CD4-positive, alpha-beta memory T cell (primary cell): ENCODE measurements at regions of chr4 and their contacts with region 1.

Region 1: DNA sequence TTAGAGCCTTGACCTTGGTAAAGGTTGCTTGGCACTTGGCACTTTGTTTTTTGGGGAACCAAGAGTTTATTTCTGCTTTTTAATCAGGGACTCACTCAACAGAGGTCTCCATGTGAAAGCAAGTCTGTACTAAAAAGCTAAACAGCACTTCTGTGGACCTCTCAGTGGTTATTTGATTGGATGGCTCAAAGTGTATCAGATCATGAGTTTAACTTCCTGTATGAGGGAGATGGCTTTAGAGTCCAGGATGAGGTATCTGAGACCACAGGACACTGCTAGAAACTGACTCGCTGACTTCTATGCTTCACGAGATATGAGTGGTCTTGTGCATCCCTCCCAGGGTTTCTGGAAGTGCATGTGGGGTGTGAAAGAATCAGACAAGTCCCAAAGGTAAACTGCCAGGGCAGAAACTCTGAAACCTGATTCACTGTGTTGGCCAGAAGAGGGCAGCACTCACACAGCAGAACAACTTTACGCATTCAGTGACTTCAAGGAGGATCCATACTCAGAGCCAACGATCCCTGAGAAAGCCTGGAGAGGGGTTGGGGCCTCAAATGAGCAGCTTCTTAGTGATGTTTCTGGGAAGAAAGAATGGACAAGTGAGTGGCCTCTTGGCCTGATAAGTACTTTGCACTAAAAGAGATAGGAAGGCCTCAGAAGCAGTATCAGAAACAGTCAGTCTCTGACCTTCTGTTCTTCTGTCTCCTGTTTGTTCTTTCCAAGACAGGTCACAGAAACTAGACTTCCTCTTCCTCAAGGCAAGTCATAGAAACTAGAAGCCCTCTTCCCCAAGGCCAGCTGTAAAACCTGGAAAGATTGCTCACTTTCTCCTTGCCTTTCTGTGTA is 220.3 kb upstream of the CXCL13 start:
- DNase-seq: peak in 4 of 5 donors; percentile 29 to 46 (median 36)
- H3K4me3 ChIP-seq: no peak overlapping the region
- H3K4me3 Mint-ChIP-seq: no peak overlapping the region
- H3K27ac ChIP-seq: no peak overlapping the region
- H3K27ac Mint-ChIP-seq: peak overlapping the region in 1 of 7 donors; percentile 2
- H3K4me1 ChIP-seq: no peaks in the 10 kb centered on the region
- H3K4me1 Mint-ChIP-seq: peaks cover 0 to 2% (median under 1%) of the 10 kb centered on the region in 4 donors
- H3K27me3 ChIP-seq: no peaks in the 10 kb centered on the region
- H3K27me3 Mint-ChIP-seq: peaks cover 0 to 3% of the 10 kb centered on the region in 2 donors

Region 2: DNA sequence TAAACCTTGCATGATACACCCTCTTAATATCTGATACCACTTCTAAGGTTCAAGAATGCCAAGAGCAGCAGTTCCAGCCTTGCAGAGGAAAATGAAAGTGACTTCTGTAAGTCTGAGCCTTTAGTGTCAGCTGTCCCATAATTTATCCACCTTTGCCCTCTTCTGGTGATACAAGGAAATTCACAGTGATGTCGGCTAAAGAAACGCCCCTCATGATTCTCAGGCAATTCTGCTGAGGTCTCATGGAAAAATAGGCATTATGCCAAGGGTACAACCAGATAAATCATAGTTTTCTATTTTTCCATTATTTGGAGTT is 48.0 kb after region 1 on chr4:
- CTCF ChIA-PET with region 1: interaction called, 13 read pairs
- POLR2A ChIA-PET with region 1: no interaction called
- intact Hi-C with region 1: no loop called
- DNase-seq: peak in 4 of 5 donors; percentile 25 to 34 (median 30)
- H3K4me3 ChIP-seq: no peak overlapping the region
- H3K4me3 Mint-ChIP-seq: no peak overlapping the region
- H3K27ac ChIP-seq: no peak overlapping the region
- H3K27ac Mint-ChIP-seq: no peak overlapping the region
- H3K4me1 ChIP-seq: peaks cover 3% of the 10 kb centered on the region
- H3K4me1 Mint-ChIP-seq: peaks cover 0 to 11% (median 5%) of the 10 kb centered on the region in 4 donors
- H3K27me3 ChIP-seq: no peaks in the 10 kb centered on the region
- H3K27me3 Mint-ChIP-seq: no peaks in the 10 kb centered on the region

Region 3: GRCh38 chr4:77500801-77501200 is 115.5 kb after region 1 on chr4:
- CTCF ChIA-PET with region 1: no interaction called
- POLR2A ChIA-PET with region 1: no interaction called
- intact Hi-C with region 1: no loop called
- DNase-seq: no peak
- H3K4me3 ChIP-seq: no peak overlapping the region
- H3K4me3 Mint-ChIP-seq: no peak overlapping the region
- H3K27ac ChIP-seq: no peak overlapping the region
- H3K27ac Mint-ChIP-seq: no peak overlapping the region
- H3K4me1 ChIP-seq: no peaks in the 10 kb centered on the region
- H3K4me1 Mint-ChIP-seq: no peaks in the 10 kb centered on the region
- H3K27me3 ChIP-seq: no peaks in the 10 kb centered on the region
- H3K27me3 Mint-ChIP-seq: peaks cover 0 to under 1% of the 10 kb centered on the region in 2 donors

Region 4: GRCh38 chr4:77618383-77619122 is 233.2 kb after region 1 on chr4:
- CTCF ChIA-PET with region 1: no interaction called
- POLR2A ChIA-PET with region 1: no interaction called
- intact Hi-C with region 1: loop called (anchors 1 kb)
- DNase-seq: peak; percentile 37 to 58 (median 45)
- H3K4me3 ChIP-seq: no peak overlapping the region
- H3K4me3 Mint-ChIP-seq: peak overlapping the region in 1 of 8 donors; percentile 45
- H3K27ac ChIP-seq: no peak overlapping the region
- H3K27ac Mint-ChIP-seq: no peak overlapping the region
- H3K4me1 ChIP-seq: peaks cover 3% of the 10 kb centered on the region
- H3K4me1 Mint-ChIP-seq: peaks cover 5 to 9% (median 6%) of the 10 kb centered on the region in 4 donors
- H3K27me3 ChIP-seq: no peaks in the 10 kb centered on the region
- H3K27me3 Mint-ChIP-seq: peaks cover 2 to 16% of the 10 kb centered on the region in 2 donors

Region 5: GRCh38 chr4:77927991-77928925 is 542.9 kb after region 1 on chr4:
- CTCF ChIA-PET with region 1: no interaction called
- POLR2A ChIA-PET with region 1: no interaction called
- intact Hi-C with region 1: no loop called
- DNase-seq: no peak
- H3K4me3 ChIP-seq: no peak overlapping the region
- H3K4me3 Mint-ChIP-seq: no peak overlapping the region
- H3K27ac ChIP-seq: no peak overlapping the region
- H3K27ac Mint-ChIP-seq: no peak overlapping the region
- H3K4me1 ChIP-seq: no peaks in the 10 kb centered on the region
- H3K4me1 Mint-ChIP-seq: peaks cover 0 to 2% (median 0%) of the 10 kb centered on the region in 4 donors
- H3K27me3 ChIP-seq: no peaks in the 10 kb centered on the region
- H3K27me3 Mint-ChIP-seq: no peaks in the 10 kb centered on the region

Region 6: GRCh38 chr4:78517050-78517652 is 1131.8 kb after region 1 on chr4:
- CTCF ChIA-PET with region 1: no interaction called
- POLR2A ChIA-PET with region 1: no interaction called
- intact Hi-C with region 1: loop called (anchors 5 kb)
- DNase-seq: no peak
- H3K4me3 ChIP-seq: no peak overlapping the region
- H3K4me3 Mint-ChIP-seq: no peak overlapping the region
- H3K27ac ChIP-seq: no peak overlapping the region
- H3K27ac Mint-ChIP-seq: no peak overlapping the region
- H3K4me1 ChIP-seq: no peaks in the 10 kb centered on the region
- H3K4me1 Mint-ChIP-seq: no peaks in the 10 kb centered on the region
- H3K27me3 ChIP-seq: no peaks in the 10 kb centered on the region
- H3K27me3 Mint-ChIP-seq: peaks cover 5 to 6% of the 10 kb centered on the region in 2 donors